GM12878 (cell line): ENCODE measurements at regions of chr6 and their contacts with region 1.

Region 1: GRCh38 chr6:12289933-12290820 is at the start of gene EDN1:
- DNase-seq: peak; percentile 51
- ATAC-seq: peak; percentile 84
- H3K4me3 ChIP-seq: peak within 1 kb of the TSS; percentile 88
- H3K27ac ChIP-seq: peak within 1 kb of the TSS; percentile 54
- H3K4me1 ChIP-seq: peaks cover 8% of the 10 kb centered on the region
- H3K27me3 ChIP-seq: no peaks in the 10 kb centered on the region
- CTCF ChIP-seq: peak; percentile 51 to 66 (median 55)
- EP300 ChIP-seq: no peak; a peak in 1 of 4 replicates
- POLR2A ChIP-seq: peak; percentile 57; the same call in 1 of the 2 replicates
- RAD21 ChIP-seq: peak; percentile 50
- polyA plus RNA-seq, gene EDN1: 2.0 to 2.5 TPM

Region 2: DNA sequence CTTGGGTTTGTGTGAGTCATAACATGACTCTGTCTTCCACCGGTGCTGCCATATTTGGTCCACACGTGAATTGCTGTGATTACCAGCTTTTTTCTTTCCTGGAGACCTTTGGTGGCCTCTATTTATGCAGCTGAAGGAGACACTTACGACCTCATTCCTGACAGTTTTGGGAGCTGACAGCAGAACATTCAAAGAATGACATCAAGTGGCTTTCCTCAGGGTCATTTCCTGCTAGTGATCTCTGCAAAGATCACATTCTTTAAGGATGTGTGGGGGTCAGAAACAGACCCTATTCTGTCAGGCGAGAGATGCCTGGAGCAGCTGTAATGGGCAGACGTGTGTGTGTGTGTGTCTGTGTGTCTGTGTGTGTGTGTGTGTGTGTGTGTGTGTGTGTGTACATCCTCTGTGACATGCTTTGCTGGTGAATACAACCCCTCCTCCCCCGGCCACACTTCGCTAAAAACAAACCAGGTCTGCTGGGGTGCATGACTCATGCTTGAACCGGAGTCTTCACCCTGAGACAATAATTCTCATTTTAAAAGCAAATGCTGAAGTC is 637.1 kb before region 1 on chr6:
- CTCF ChIA-PET with region 1: interaction called, 205 read pairs
- POLR2A ChIA-PET with region 1: interaction called, 15 read pairs
- RAD21 ChIA-PET with region 1: interaction called, 111 read pairs
- SMC1A ChIA-PET with region 1: interaction called, 141 read pairs
- in situ Hi-C with region 1: loop called (anchors 5 kb)
- intact Hi-C with region 1: loop called (anchors 1 kb)
- DNase-seq: no peak
- ATAC-seq: peak; percentile 80
- H3K4me3 ChIP-seq: no peak overlapping the region
- H3K27ac ChIP-seq: no peak overlapping the region
- H3K4me1 ChIP-seq: peaks cover 17% of the 10 kb centered on the region
- H3K27me3 ChIP-seq: no peaks in the 10 kb centered on the region
- CTCF ChIP-seq: no peak
- EP300 ChIP-seq: no peak
- POLR2A ChIP-seq: no peak
- RAD21 ChIP-seq: no peak

Region 3: DNA sequence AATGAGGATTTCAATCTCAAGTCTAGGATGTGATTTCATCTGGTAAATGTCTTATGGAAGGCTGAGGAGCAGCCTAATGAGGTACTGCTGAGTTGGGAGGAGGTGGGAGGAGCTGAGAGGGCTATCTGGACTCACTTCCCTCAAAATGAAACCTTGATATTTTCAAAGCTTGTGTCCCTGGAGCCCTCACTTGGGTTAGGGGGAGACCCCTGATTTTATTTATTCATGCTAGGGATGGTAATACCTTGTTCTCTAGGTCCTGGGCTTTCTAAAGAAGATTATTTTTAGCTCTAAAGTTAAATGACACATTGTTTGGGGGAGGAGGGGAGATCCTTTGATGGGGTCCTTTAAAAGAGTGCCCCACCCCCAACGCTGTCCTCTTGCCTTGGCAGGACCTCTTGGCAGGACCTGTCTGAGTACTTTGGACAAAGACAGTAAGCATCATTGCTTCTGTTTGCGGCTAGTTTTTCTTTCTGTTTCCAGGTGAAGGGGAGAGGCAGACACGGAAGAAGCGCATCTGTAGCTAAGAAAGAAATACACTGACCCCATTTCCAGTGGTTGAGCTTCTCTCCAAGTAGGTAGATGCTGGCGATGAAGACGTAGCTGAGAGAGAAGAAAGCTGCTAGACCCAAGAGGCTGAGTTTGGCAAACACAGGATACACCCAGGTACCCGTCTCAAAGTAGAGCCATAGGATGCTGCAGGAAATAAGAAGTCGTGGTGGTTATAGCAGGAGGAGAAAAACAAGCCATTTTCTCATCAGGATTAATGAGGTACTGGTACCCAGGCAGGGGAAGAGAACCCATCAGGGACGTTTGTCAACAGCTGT is 567.2 kb before region 1 on chr6:
- CTCF ChIA-PET with region 1: interaction called, 16 read pairs
- POLR2A ChIA-PET with region 1: no interaction called
- RAD21 ChIA-PET with region 1: interaction called, 13 read pairs
- SMC1A ChIA-PET with region 1: interaction called, 20 read pairs
- in situ Hi-C with region 1: no loop called
- intact Hi-C with region 1: no loop called
- DNase-seq: no peak
- ATAC-seq: peak; percentile 78
- H3K4me3 ChIP-seq: peak overlapping the region; percentile 63
- H3K27ac ChIP-seq: peak overlapping the region; percentile 88
- H3K4me1 ChIP-seq: peaks cover 8% of the 10 kb centered on the region
- H3K27me3 ChIP-seq: no peaks in the 10 kb centered on the region
- CTCF ChIP-seq: no peak
- EP300 ChIP-seq: no peak
- POLR2A ChIP-seq: no peak; the same call in 1 of the 2 replicates
- RAD21 ChIP-seq: 0 out of 2 replicates have a peak, but pooled peaks have one; percentile 4

Region 4: DNA sequence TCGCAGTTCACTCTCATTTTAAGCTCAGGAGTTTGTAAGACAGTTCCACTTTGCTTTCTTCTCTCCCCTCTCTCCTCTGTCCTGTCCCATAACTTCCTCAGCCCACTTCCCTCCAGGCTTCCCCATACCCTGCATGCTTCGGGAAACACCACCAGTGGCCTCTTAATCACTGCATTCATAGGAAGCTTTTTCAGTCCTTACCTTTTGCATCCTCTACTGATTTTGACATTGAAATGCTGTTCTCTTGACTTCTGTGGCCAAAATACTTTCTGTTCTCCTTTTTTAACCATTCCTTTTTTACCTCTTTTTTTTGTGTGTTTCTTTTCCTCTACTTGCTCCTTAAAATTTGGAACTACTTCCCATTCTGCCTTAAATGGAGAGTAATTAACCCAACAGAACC is 208.4 kb before region 1 on chr6:
- CTCF ChIA-PET with region 1: interaction called, 3 read pairs
- POLR2A ChIA-PET with region 1: interaction called, 3 read pairs
- RAD21 ChIA-PET with region 1: interaction called, 10 read pairs
- SMC1A ChIA-PET with region 1: interaction called, 3 read pairs
- in situ Hi-C with region 1: no loop called
- intact Hi-C with region 1: loop called (anchors 10 kb)
- DNase-seq: no peak
- ATAC-seq: peak; percentile 68
- H3K4me3 ChIP-seq: peak overlapping the region; percentile 32; the same call in 1 of the 2 replicates
- H3K27ac ChIP-seq: peak overlapping the region; percentile 50
- H3K4me1 ChIP-seq: peaks cover 28% of the 10 kb centered on the region
- H3K27me3 ChIP-seq: no peaks in the 10 kb centered on the region
- CTCF ChIP-seq: no peak
- EP300 ChIP-seq: no peak
- POLR2A ChIP-seq: no peak
- RAD21 ChIP-seq: no peak

Region 5: DNA sequence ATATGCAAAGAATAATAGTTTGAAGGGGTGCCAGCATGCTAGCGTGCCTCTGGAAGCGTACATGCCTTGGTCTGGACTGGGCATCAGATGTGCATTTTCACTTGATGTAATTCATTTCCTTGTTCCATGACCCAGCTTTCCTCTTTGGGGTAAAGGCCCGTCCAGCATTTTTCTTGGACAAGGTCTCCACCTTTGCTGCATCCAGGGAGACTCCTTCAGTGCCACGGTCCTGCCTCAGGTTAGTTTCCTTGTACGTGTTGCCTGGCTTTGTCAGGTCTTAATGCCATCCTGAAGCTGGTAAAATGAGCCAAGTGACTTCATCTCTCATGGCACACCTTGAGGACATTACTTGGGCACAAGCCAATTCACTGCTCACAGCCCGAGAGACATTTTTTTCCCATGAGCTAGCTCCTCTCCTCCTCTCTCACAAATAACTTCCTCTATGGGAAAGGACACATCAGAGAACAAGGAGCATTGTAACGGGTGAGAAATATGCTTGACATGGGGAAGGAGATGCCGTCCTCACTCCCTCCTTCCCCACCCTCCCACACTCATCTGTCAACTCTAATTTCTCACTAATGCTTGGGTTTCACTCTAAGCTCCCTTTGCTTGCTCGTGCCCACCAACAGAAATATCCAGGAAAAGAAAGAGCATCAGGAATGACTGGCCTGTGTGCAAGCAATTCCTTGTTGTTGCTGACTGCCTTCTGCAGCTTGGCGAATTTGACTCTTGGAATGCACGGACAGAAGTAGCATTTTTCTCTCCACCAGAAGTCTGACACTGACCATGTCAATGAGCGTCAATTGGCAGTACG is 24.0 kb after region 1 on chr6:
- CTCF ChIA-PET with region 1: interaction called, 30 read pairs
- POLR2A ChIA-PET with region 1: no interaction called
- RAD21 ChIA-PET with region 1: interaction called, 10 read pairs
- SMC1A ChIA-PET with region 1: interaction called, 39 read pairs
- in situ Hi-C with region 1: no loop called
- intact Hi-C with region 1: no loop called
- DNase-seq: no peak
- ATAC-seq: no peak
- H3K4me3 ChIP-seq: no peak overlapping the region
- H3K27ac ChIP-seq: no peak overlapping the region
- H3K4me1 ChIP-seq: no peaks in the 10 kb centered on the region
- H3K27me3 ChIP-seq: no peaks in the 10 kb centered on the region
- CTCF ChIP-seq: no peak
- EP300 ChIP-seq: no peak
- POLR2A ChIP-seq: no peak
- RAD21 ChIP-seq: no peak

Region 6: DNA sequence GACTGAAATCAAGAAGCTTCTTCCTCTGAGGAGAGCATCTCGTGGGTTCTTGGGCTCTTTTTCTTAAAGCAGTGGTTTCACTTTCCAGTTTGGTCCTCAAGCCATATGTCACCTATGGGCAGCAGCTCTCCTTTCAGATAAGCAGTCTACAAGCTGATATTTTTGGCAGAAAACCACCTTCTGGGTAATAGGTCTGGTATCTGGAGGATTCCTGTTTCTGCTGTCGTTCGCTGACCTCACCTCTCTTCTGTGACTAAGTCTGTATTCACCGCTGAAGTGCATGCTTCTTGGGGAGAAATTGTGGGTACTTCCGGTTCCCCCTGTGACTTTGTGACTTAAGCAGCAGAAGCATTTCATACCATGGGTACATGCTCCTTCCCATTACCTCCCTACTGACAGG is 193.5 kb after region 1 on chr6:
- CTCF ChIA-PET with region 1: interaction called, 54 read pairs
- POLR2A ChIA-PET with region 1: no interaction called
- RAD21 ChIA-PET with region 1: interaction called, 60 read pairs
- SMC1A ChIA-PET with region 1: interaction called, 57 read pairs
- in situ Hi-C with region 1: no loop called
- intact Hi-C with region 1: loop called (anchors 5 kb)
- DNase-seq: peak; percentile 64
- ATAC-seq: peak; percentile 94
- H3K4me3 ChIP-seq: peak overlapping the region; percentile 27; the same call in 1 of the 2 replicates
- H3K27ac ChIP-seq: no peak overlapping the region
- H3K4me1 ChIP-seq: peaks cover 7% of the 10 kb centered on the region; the same call in 1 of the 2 replicates
- H3K27me3 ChIP-seq: no peaks in the 10 kb centered on the region
- CTCF ChIP-seq: no peak
- EP300 ChIP-seq: no peak
- POLR2A ChIP-seq: no peak
- RAD21 ChIP-seq: no peak

Region 7: DNA sequence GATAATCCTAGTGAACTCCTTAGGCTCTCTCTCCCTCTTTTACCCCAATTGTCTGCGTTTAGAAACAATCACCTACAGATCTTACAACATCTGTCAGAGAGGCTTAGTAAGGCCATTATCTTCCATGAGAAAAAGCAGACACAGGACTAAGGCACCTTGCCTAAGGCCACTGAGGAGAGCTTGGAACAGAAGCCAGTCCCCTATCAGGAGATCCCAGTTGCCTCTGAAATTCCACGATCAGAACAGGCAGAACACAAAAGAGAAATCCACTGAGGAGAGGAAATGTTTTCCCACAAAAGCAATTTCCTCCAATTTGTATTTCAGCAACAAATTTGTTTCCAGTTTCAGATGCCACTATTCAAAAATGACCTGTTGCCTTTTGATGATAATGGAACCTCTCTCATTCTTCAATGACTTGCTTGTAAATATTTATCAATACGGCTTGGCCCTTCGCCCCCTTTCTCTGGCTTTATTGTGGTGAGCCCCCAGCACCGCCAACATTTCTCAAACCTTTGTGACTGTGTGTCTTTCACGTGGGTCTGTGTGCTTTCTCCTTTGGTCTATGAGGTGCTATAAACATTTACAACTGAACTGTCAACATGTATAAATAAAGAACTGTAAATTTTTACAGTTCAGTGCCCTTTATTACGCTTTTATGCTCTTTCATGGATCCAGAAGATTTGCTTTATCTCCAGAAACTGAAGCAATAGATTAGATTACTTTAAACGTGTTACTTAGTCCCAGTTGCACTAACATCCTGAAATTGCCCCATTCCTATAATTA is 238.6 kb after region 1 on chr6:
- CTCF ChIA-PET with region 1: no interaction called
- POLR2A ChIA-PET with region 1: no interaction called
- RAD21 ChIA-PET with region 1: no interaction called
- SMC1A ChIA-PET with region 1: no interaction called
- in situ Hi-C with region 1: no loop called
- intact Hi-C with region 1: no loop called
- DNase-seq: no peak
- ATAC-seq: no peak
- H3K4me3 ChIP-seq: no peak overlapping the region
- H3K27ac ChIP-seq: no peak overlapping the region
- H3K4me1 ChIP-seq: no peaks in the 10 kb centered on the region
- H3K27me3 ChIP-seq: no peaks in the 10 kb centered on the region
- CTCF ChIP-seq: no peak
- EP300 ChIP-seq: no peak
- POLR2A ChIP-seq: no peak
- RAD21 ChIP-seq: no peak

Region 8: DNA sequence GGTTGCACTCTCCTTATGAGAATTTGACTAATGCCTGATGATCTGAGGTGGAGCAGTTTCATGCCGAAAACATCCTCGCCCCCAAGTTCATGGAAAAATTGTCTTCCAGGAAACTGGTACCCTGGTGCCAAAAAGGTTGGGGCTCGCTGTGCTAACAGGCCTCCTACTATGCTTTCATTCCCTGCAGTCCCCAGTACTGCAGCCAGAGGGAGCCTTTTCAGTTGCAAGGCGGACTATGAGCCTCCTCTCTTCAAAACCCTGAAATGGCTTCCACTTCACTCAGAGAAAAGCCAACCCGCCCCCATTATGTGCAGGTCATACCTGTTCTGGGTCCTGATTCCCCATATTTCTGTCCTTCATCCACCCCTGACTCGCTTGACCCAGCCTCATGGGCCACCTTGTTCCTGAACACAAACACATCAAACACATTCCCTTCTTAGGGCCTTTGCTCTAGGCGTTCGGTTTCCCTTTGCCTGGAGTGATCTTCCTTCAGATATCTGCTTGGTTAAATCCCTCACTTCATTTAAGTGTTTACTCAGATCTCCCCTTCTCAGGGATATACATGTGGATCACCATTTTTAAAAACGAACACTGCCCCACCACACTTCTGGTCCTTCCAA is 600.1 kb after region 1 on chr6:
- CTCF ChIA-PET with region 1: no interaction called
- POLR2A ChIA-PET with region 1: no interaction called
- RAD21 ChIA-PET with region 1: interaction called, 4 read pairs
- SMC1A ChIA-PET with region 1: interaction called, 5 read pairs
- in situ Hi-C with region 1: no loop called
- intact Hi-C with region 1: loop called (anchors 5 kb)
- DNase-seq: no peak
- ATAC-seq: peak; percentile 65
- H3K4me3 ChIP-seq: no peak overlapping the region
- H3K27ac ChIP-seq: no peak overlapping the region
- H3K4me1 ChIP-seq: no peaks in the 10 kb centered on the region
- H3K27me3 ChIP-seq: no peaks in the 10 kb centered on the region; a peak in 2 of 4 replicates
- CTCF ChIP-seq: peak; percentile 32 to 64 (median 55)
- EP300 ChIP-seq: no peak
- POLR2A ChIP-seq: no peak
- RAD21 ChIP-seq: no peak

Region 9: GRCh38 chr6:13159300-13159699 is 869.1 kb after region 1 on chr6:
- CTCF ChIA-PET with region 1: no interaction called
- POLR2A ChIA-PET with region 1: no interaction called
- RAD21 ChIA-PET with region 1: no interaction called
- SMC1A ChIA-PET with region 1: no interaction called
- in situ Hi-C with region 1: no loop called
- intact Hi-C with region 1: no loop called
- DNase-seq: no peak
- ATAC-seq: no peak
- H3K4me3 ChIP-seq: no peak overlapping the region
- H3K27ac ChIP-seq: no peak overlapping the region
- H3K4me1 ChIP-seq: no peaks in the 10 kb centered on the region
- H3K27me3 ChIP-seq: peaks cover 0 to 1% of the 10 kb centered on the region in 2 experiments; a peak in 3 of 4 replicates
- CTCF ChIP-seq: no peak
- EP300 ChIP-seq: no peak
- POLR2A ChIP-seq: no peak
- RAD21 ChIP-seq: no peak